ENCODE measurements at regions of chr7 and their contacts with region 1.

Region 1: DNA sequence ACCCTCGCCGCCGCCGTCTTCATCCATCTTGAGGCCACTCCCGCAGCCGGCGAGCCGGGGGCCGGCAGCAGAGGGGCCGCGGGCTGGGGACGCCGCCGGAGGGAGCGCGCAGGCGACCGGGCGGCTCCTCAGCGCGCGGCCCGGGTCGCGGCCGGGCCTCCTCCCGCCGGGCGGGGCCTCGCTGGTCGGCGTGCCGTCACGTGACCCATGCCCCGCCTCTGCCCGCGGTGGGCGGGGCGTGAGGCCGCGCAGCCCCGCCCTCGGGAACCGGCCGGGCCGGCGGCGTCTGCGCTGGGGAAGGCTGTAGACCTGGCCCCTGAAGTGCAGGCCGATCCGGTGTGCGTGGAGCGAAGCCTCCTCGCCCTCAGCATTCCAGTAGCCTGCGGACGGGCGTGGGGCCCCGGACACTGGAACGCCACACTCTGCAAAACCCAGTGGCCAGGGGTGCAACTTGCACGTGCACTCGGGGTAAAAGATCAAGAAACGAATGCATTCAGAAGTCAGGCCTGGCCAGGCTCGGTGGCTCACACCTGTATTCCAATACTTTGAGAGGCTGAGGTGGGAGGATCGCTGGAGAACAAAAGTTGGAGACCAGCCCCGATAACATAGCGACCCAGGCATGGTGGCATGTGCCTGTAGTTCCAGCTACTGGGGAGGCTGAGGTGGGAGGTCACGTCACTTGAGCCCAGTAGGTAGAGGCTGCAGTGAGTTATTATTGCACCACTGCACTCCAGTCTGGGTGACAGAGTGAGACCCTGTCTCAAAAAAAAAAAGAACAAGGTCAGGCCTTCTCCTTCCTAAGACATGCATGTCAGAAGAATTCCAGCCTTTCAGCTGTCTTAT is at the start of gene CYTH3:
- DNase-seq: peak; percentile 82
- H3K4me3 Mint-ChIP-seq: peak within 1 kb of the TSS; percentile 80
- H3K27ac Mint-ChIP-seq: no peak within 1 kb of the TSS
- H3K4me1 Mint-ChIP-seq: peaks cover 15% of the 10 kb centered on the region
- H3K27me3 Mint-ChIP-seq: peaks cover 26% of the 10 kb centered on the region
- total RNA-seq, gene CYTH3: 1.6 to 2.0 TPM

Region 2: GRCh38 chr7:6256677-6257535 is 15.8 kb before region 1 on chr7:
- CTCF ChIA-PET with region 1: interaction called, 13 read pairs
- POLR2A ChIA-PET with region 1: interaction called, 3 read pairs
- intact Hi-C with region 1: loop called (anchors 2 kb)
- DNase-seq: peak; percentile 60
- H3K4me3 Mint-ChIP-seq: no peak overlapping the region
- H3K27ac Mint-ChIP-seq: no peak overlapping the region
- H3K4me1 Mint-ChIP-seq: peaks cover 42% of the 10 kb centered on the region
- H3K27me3 Mint-ChIP-seq: peaks cover 21% of the 10 kb centered on the region

Region 3: GRCh38 chr7:6317797-6318438 is 45.2 kb after region 1 on chr7:
- CTCF ChIA-PET with region 1: no interaction called
- POLR2A ChIA-PET with region 1: no interaction called
- intact Hi-C with region 1: no loop called
- DNase-seq: no peak
- H3K4me3 Mint-ChIP-seq: no peak overlapping the region
- H3K27ac Mint-ChIP-seq: no peak overlapping the region
- H3K4me1 Mint-ChIP-seq: no peaks in the 10 kb centered on the region
- H3K27me3 Mint-ChIP-seq: no peaks in the 10 kb centered on the region